ENCODE measurements at regions of chr6 and their contacts with region 1.

Region 1: GRCh38 chr6:14129575-14129974 is 12.0 kb downstream of the CD83 start:
- DNase-seq: peak; percentile 76
- H3K4me3 ChIP-seq: no peak overlapping the region; a peak in 1 of 4 replicates
- H3K27ac ChIP-seq: no peak overlapping the region
- H3K4me1 ChIP-seq: peaks cover 0 to 4% of the 10 kb centered on the region in 2 experiments; a peak in 2 of 4 replicates
- H3K27me3 ChIP-seq: no peaks in the 10 kb centered on the region
- CTCF ChIP-seq: peak; percentile 51
- EP300 ChIP-seq: no peak
- RAD21 ChIP-seq: peak; percentile 85

Region 2: GRCh38 chr6:13971303-13971702 is 158.3 kb before region 1 on chr6:
- CTCF ChIA-PET with region 1: no interaction called
- POLR2A ChIA-PET with region 1: no interaction called
- DNase-seq: no peak
- H3K4me3 ChIP-seq: no peak overlapping the region
- H3K27ac ChIP-seq: no peak overlapping the region
- H3K4me1 ChIP-seq: no peaks in the 10 kb centered on the region
- H3K27me3 ChIP-seq: no peaks in the 10 kb centered on the region
- CTCF ChIP-seq: no peak
- EP300 ChIP-seq: no peak
- RAD21 ChIP-seq: no peak

Region 3: GRCh38 chr6:14144678-14145113 is 15.1 kb after region 1 on chr6:
- CTCF ChIA-PET with region 1: interaction called, 38 read pairs
- POLR2A ChIA-PET with region 1: no interaction called
- DNase-seq: peak; percentile 82
- H3K4me3 ChIP-seq: peak overlapping the region in 1 of 2 experiments; percentile 30; a peak in 1 of 4 replicates
- H3K27ac ChIP-seq: no peak overlapping the region
- H3K4me1 ChIP-seq: no peaks in the 10 kb centered on the region; a peak in 2 of 4 replicates
- H3K27me3 ChIP-seq: no peaks in the 10 kb centered on the region
- CTCF ChIP-seq: peak; percentile 89
- EP300 ChIP-seq: no peak
- RAD21 ChIP-seq: peak; percentile 76

Region 4: DNA sequence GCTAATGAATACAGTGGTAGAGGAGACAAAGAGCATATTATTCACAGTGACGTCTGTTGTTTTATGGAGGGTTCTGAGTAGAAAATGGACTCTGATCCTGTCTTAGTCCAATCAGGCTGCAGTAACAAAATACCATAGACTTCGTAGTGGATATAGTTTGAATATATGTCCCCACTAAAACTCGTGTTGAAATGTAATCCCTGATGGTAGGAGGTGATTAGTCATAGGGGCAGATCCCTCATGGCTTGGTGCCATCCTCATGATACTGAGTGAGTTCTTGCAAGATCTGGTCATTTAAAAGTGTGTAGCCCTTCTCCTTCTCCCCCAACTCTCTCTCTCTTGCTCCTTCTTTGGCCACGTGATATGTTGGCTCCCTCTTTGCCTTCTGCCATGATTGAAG is 70.5 kb after region 1 on chr6:
- CTCF ChIA-PET with region 1: no interaction called
- POLR2A ChIA-PET with region 1: no interaction called
- DNase-seq: no peak
- H3K4me3 ChIP-seq: no peak overlapping the region
- H3K27ac ChIP-seq: no peak overlapping the region
- H3K4me1 ChIP-seq: no peaks in the 10 kb centered on the region
- H3K27me3 ChIP-seq: no peaks in the 10 kb centered on the region; the same call in 1 of the 2 replicates
- CTCF ChIP-seq: no peak
- EP300 ChIP-seq: no peak
- RAD21 ChIP-seq: no peak

Region 5: GRCh38 chr6:14210663-14211561 is 81.3 kb after region 1 on chr6:
- CTCF ChIA-PET with region 1: interaction called, 13 read pairs
- POLR2A ChIA-PET with region 1: no interaction called
- DNase-seq: peak; percentile 98
- H3K4me3 ChIP-seq: peak overlapping the region; percentile 83 to 92
- H3K27ac ChIP-seq: peak overlapping the region in 1 of 2 experiments; percentile 93; a peak in 2 of 4 replicates
- H3K4me1 ChIP-seq: peaks cover 0 to 16% of the 10 kb centered on the region in 2 experiments; a peak in 2 of 4 replicates
- H3K27me3 ChIP-seq: no peaks in the 10 kb centered on the region
- CTCF ChIP-seq: peak; percentile 55
- EP300 ChIP-seq: peak; percentile 53 to 91; a peak in 3 of 4 replicates
- RAD21 ChIP-seq: peak; percentile 84

Region 6: GRCh38 chr6:14316635-14317386 is 187.2 kb after region 1 on chr6:
- CTCF ChIA-PET with region 1: no interaction called
- POLR2A ChIA-PET with region 1: no interaction called
- DNase-seq: peak; percentile 22
- H3K4me3 ChIP-seq: no peak overlapping the region
- H3K27ac ChIP-seq: no peak overlapping the region
- H3K4me1 ChIP-seq: no peaks in the 10 kb centered on the region
- H3K27me3 ChIP-seq: no peaks in the 10 kb centered on the region
- CTCF ChIP-seq: no peak
- EP300 ChIP-seq: no peak
- RAD21 ChIP-seq: no peak

Region 7: DNA sequence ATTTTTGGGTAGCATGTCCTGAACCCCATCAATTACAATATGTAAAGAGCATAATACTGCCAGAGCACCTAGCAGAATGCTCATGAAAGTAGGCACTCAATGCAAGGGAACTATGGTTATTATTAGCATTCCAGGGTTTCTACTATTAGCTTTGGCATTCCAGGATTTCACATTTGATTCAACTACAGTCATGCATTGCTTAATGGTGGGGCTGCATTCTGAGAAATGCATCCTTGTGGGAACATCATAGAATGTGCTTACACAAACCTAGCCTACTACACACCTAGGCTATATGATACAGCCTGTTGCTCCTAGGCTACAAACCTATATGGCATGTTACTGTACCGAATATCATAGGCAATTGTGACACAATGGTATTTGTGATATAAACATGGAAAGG is 235.8 kb after region 1 on chr6:
- CTCF ChIA-PET with region 1: no interaction called
- POLR2A ChIA-PET with region 1: no interaction called
- DNase-seq: no peak
- H3K4me3 ChIP-seq: no peak overlapping the region
- H3K27ac ChIP-seq: no peak overlapping the region
- H3K4me1 ChIP-seq: no peaks in the 10 kb centered on the region
- H3K27me3 ChIP-seq: no peaks in the 10 kb centered on the region
- CTCF ChIP-seq: no peak
- EP300 ChIP-seq: no peak
- RAD21 ChIP-seq: no peak

Region 8: GRCh38 chr6:15389765-15390723 is 1260.5 kb after region 1 on chr6:
- CTCF ChIA-PET with region 1: interaction called, 12 read pairs
- POLR2A ChIA-PET with region 1: no interaction called
- DNase-seq: peak; percentile 75
- H3K4me3 ChIP-seq: no peak overlapping the region; a peak in 1 of 4 replicates
- H3K27ac ChIP-seq: no peak overlapping the region
- H3K4me1 ChIP-seq: peaks cover 12 to 18% of the 10 kb centered on the region in 2 experiments; a peak in 2 of 4 replicates
- H3K27me3 ChIP-seq: no peaks in the 10 kb centered on the region
- CTCF ChIP-seq: peak; percentile 80
- EP300 ChIP-seq: no peak
- RAD21 ChIP-seq: peak; percentile 93

Measured in SK-N-SH (cell line).